HEK293 (cell line): ENCODE measurements at regions of chr1 and their contacts with region 1.

Region 1: GRCh38 chr1:151839457-151840405 is at the start of gene C2CD4D:
- H3K4me3 ChIP-seq: no peak within 1 kb of the TSS
- H3K27ac ChIP-seq: no peak within 1 kb of the TSS
- H3K4me1 ChIP-seq: no peaks in the 10 kb centered on the region
- CTCF ChIP-seq: no peak

Region 2: DNA sequence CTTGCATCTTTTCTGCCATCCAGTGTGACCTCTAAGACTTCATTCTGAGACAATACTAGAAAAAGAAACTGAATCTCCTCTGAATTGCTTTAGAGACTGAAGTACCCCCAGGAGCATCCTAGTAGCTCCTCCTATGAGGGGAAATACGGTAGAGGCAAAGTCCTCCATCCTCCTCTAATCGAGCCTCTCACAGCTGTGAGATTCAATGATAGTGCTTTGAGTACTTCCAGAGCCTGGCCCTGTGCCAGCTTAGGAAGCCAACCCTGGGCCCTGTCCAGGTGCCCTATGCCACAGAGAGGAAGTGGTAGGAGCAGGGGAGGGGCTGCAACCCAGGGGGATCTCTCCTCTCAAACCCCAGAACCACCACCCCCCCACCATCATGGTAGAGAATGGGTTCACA is 18.8 kb before region 1 on chr1:
- CTCF ChIA-PET with region 1: interaction called, 10 read pairs
- POLR2A ChIA-PET with region 1: no interaction called
- H3K4me3 ChIP-seq: no peak overlapping the region
- H3K27ac ChIP-seq: no peak overlapping the region
- H3K4me1 ChIP-seq: no peaks in the 10 kb centered on the region
- CTCF ChIP-seq: no peak

Region 3: GRCh38 chr1:151862604-151863003 is 22.9 kb after region 1 on chr1:
- CTCF ChIA-PET with region 1: no interaction called
- POLR2A ChIA-PET with region 1: no interaction called
- H3K4me3 ChIP-seq: no peak overlapping the region
- H3K27ac ChIP-seq: no peak overlapping the region
- H3K4me1 ChIP-seq: no peaks in the 10 kb centered on the region
- CTCF ChIP-seq: no peak

Region 4: GRCh38 chr1:151881456-151881855 is 41.7 kb after region 1 on chr1:
- CTCF ChIA-PET with region 1: interaction called, 10 read pairs
- POLR2A ChIA-PET with region 1: no interaction called
- H3K4me3 ChIP-seq: no peak overlapping the region
- H3K27ac ChIP-seq: no peak overlapping the region
- H3K4me1 ChIP-seq: no peaks in the 10 kb centered on the region
- CTCF ChIP-seq: peak; percentile 35; the same call in 1 of the 2 replicates